ENCODE measurements at regions of chr3 and their contacts with region 1.

Region 1: GRCh38 chr3:17841190-17841828 is 98.9 kb upstream of the TBC1D5 start:
- H3K4me3 ChIP-seq: no peak overlapping the region
- H3K27ac ChIP-seq: no peak overlapping the region
- H3K4me1 ChIP-seq: no peaks in the 10 kb centered on the region
- CTCF ChIP-seq: peak; percentile 92

Region 2: GRCh38 chr3:17412950-17413530 is 428.3 kb before region 1 on chr3:
- CTCF ChIA-PET with region 1: interaction called, 12 read pairs
- POLR2A ChIA-PET with region 1: no interaction called
- H3K4me3 ChIP-seq: no peak overlapping the region
- H3K27ac ChIP-seq: no peak overlapping the region
- H3K4me1 ChIP-seq: no peaks in the 10 kb centered on the region
- CTCF ChIP-seq: peak; percentile 68

Region 3: DNA sequence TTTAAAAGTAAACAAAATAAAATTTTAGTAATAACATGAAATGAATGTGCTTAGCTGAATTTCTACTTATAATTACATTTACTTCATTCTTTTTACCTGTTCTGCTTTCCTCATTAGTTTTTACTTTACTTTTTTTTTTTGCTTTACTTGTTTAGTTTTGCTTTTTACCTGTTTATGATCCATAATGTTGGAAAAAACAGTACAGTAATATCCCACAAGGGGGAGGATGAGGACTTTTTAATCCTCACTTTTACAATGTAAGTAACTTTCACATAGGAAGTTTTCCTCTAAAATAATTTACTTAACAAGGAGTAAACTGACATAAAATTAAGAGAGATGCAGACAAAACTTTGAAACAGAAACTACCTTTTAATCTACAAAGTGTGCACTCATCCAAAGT is 367.5 kb before region 1 on chr3:
- CTCF ChIA-PET with region 1: interaction called, 10 read pairs
- POLR2A ChIA-PET with region 1: no interaction called
- H3K4me3 ChIP-seq: no peak overlapping the region
- H3K27ac ChIP-seq: no peak overlapping the region
- H3K4me1 ChIP-seq: no peaks in the 10 kb centered on the region
- CTCF ChIP-seq: no peak

Region 4: GRCh38 chr3:17645072-17645698 is 196.1 kb before region 1 on chr3:
- CTCF ChIA-PET with region 1: interaction called, 72 read pairs
- POLR2A ChIA-PET with region 1: no interaction called
- H3K4me3 ChIP-seq: no peak overlapping the region
- H3K27ac ChIP-seq: no peak overlapping the region
- H3K4me1 ChIP-seq: no peaks in the 10 kb centered on the region
- CTCF ChIP-seq: peak; percentile 43; the same call in 1 of the 2 replicates

Region 5: DNA sequence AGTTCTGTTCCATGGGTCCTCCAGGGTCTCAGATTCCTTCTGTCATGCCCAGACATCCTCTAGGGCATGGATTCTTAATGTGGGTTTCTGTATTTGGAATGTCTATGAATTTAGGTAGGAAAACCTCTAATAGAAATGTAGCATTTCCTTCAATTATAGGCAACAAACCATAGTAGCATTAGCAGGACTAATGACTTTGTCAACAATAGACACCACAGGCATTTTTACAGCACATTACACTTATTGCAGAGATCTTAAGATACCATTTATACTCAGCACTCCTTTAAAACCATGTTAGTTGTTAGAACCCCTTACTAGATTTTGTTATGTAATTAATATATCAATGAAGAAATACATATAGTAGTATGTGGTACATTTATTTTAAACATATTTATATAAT is 21.0 kb before region 1 on chr3:
- CTCF ChIA-PET with region 1: interaction called, 25 read pairs
- POLR2A ChIA-PET with region 1: no interaction called
- H3K4me3 ChIP-seq: no peak overlapping the region
- H3K27ac ChIP-seq: no peak overlapping the region
- H3K4me1 ChIP-seq: no peaks in the 10 kb centered on the region
- CTCF ChIP-seq: no peak

Measured in HEK293 (cell line).